Sigmoid colon (tissue), 7 donors: ENCODE measurements at regions of chr2 and their contacts with region 1.

Region 1: GRCh38 chr2:197705121-197705911 is at the start of gene MARS2:
- DNase-seq: peak; percentile 96
- H3K4me3 ChIP-seq: peak within 1 kb of the TSS; percentile 68 to 92 (median 76)
- H3K27ac ChIP-seq: peak within 1 kb of the TSS; percentile 77 to 87 (median 81)
- H3K4me1 ChIP-seq: peaks cover 0 to 40% (median 37%) of the 10 kb centered on the region in 4 donors
- H3K27me3 ChIP-seq: no peaks in the 10 kb centered on the region
- CTCF ChIP-seq: no peak
- EP300 ChIP-seq: no peak
- POLR2A ChIP-seq: peak; percentile 10 to 18
- total RNA-seq, gene MARS2: 3.1 to 6.6 (median 4.5) TPM

Region 2: GRCh38 chr2:197647961-197648690 is 57.2 kb before region 1 on chr2:
- intact Hi-C with region 1: no loop called
- DNase-seq: no peak
- H3K4me3 ChIP-seq: no peak overlapping the region
- H3K27ac ChIP-seq: no peak overlapping the region
- H3K4me1 ChIP-seq: no peaks in the 10 kb centered on the region
- H3K27me3 ChIP-seq: no peaks in the 10 kb centered on the region
- CTCF ChIP-seq: no peak
- EP300 ChIP-seq: no peak
- POLR2A ChIP-seq: no peak

Region 3: DNA sequence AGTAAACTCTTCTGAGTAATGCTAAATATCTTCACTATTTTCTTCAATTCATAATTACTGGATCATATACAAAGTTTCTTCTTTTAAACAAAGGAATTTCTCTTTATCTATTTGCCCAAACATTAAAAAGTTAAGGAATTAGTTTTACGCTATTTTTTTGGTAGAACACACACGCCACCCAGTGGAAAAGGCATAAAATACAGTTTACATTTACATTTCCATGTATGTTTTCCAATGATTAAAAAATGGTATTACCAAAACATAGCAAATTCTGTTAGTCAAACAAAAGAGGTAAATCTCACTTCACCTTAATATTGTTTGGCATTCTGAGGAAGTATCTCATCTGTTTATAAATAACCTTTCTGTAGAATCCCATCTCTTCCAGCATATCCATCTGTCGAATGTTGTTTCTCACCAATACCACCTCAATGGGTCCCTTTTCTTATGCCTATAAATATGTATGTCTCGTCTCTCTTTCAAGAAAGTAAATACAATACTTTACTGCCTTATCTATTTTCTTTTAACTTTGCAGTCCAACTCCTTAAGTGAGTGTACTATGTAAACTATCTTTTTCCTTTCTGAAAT is 72.6 kb after region 1 on chr2:
- intact Hi-C with region 1: loop called (anchors 2 kb)
- DNase-seq: no peak
- H3K4me3 ChIP-seq: no peak overlapping the region
- H3K27ac ChIP-seq: no peak overlapping the region
- H3K4me1 ChIP-seq: no peaks in the 10 kb centered on the region
- H3K27me3 ChIP-seq: no peaks in the 10 kb centered on the region
- CTCF ChIP-seq: peak; percentile 34 to 68 (median 50)
- EP300 ChIP-seq: no peak
- POLR2A ChIP-seq: no peak

Region 4: DNA sequence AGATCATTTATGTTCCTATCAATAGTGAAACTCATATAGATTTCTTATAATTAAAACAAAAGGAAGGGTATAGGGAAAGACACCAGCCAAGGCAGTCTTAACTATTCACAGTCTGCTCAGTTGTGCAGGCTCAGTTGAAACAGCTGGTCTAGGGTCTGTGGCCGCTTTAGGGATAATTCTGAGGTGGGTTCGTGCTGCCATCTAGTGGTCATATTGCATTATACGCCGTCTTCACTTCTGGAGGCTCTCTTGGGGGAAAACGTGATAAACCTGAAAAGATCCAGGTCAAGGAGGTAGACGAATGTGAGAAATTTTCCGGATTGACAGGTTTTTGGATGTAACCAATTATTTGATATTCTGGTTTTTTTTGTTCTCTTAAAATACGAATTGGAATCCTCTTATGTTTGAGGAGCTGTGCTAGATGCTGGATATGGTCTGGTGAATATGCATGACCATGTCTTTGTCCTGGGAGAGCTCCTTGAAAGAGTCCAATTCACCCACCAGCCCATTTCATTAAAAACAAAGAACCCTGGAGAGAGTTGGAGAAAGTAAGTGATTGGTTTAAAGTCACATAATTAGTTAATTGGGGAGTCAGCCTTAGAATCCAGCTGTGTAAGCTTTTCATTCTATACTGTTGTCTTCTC is 591.5 kb after region 1 on chr2:
- intact Hi-C with region 1: loop called (anchors 10 kb)
- DNase-seq: no peak
- H3K4me3 ChIP-seq: no peak overlapping the region
- H3K27ac ChIP-seq: no peak overlapping the region
- H3K4me1 ChIP-seq: peaks cover 0 to 4% (median 0%) of the 10 kb centered on the region in 4 donors
- H3K27me3 ChIP-seq: no peaks in the 10 kb centered on the region
- CTCF ChIP-seq: peak; percentile 48 to 82 (median 74)
- EP300 ChIP-seq: no peak
- POLR2A ChIP-seq: no peak